HCT116 (cell line): ENCODE measurements at regions of chr21 and their contacts with region 1.

Region 1: GRCh38 chr21:36156339-36156814 is 247 bp upstream of the DOP1B start:
- DNase-seq: peak; percentile 97
- ATAC-seq: peak; percentile 87
- H3K4me3 ChIP-seq: peak overlapping the region; percentile 68 to 72
- H3K27ac ChIP-seq: peak overlapping the region; percentile 81; the same call in 1 of the 2 replicates
- H3K4me1 ChIP-seq: peaks cover 13 to 25% of the 10 kb centered on the region in 2 experiments
- H3K27me3 ChIP-seq: no peaks in the 10 kb centered on the region
- CTCF ChIP-seq: no peak
- POLR2A ChIP-seq: no peak
- RAD21 ChIP-seq: no peak

Region 2: GRCh38 chr21:36188081-36188681 is 31.8 kb after region 1 on chr21:
- CTCF ChIA-PET with region 1: no interaction called
- POLR2A ChIA-PET with region 1: no interaction called
- RAD21 ChIA-PET with region 1: no interaction called
- intact Hi-C with region 1: no loop called
- DNase-seq: no peak
- ATAC-seq: peak; percentile 82
- H3K4me3 ChIP-seq: no peak overlapping the region
- H3K27ac ChIP-seq: peak overlapping the region; percentile 33; the same call in 1 of the 2 replicates
- H3K4me1 ChIP-seq: peaks cover 16 to 24% of the 10 kb centered on the region in 2 experiments; a peak in 3 of 4 replicates
- H3K27me3 ChIP-seq: no peaks in the 10 kb centered on the region
- CTCF ChIP-seq: peak in 1 of 3 experiments; percentile 19; a peak in 1 of 6 replicates
- POLR2A ChIP-seq: no peak
- RAD21 ChIP-seq: no peak

Region 3: GRCh38 chr21:36385233-36386030 is 229.1 kb after region 1 on chr21 and contains the start of gene CHAF1B:
- CTCF ChIA-PET with region 1: no interaction called
- POLR2A ChIA-PET with region 1: no interaction called
- RAD21 ChIA-PET with region 1: no interaction called
- intact Hi-C with region 1: loop called (anchors 5 kb)
- DNase-seq: peak; percentile 51
- ATAC-seq: peak; percentile 96
- H3K4me3 ChIP-seq: peak within 1 kb of the TSS; percentile 78 to 83
- H3K27ac ChIP-seq: peak within 1 kb of the TSS; percentile 61
- H3K4me1 ChIP-seq: peaks cover 20 to 25% of the 10 kb centered on the region in 2 experiments
- H3K27me3 ChIP-seq: no peaks in the 10 kb centered on the region
- CTCF ChIP-seq: no peak
- POLR2A ChIP-seq: peak; percentile 72
- RAD21 ChIP-seq: no peak
- total RNA-seq, gene CHAF1B: 26.1 TPM